Endothelial cell of umbilical vein (primary cell): ENCODE measurements at regions of chr3 and their contacts with region 1.

Region 1: GRCh38 chr3:39960515-39961191 is 151.2 kb downstream of the MYRIP start:
- DNase-seq: peak; percentile 99
- H3K4me3 ChIP-seq: no peak overlapping the region
- H3K27ac ChIP-seq: peak overlapping the region; percentile 70
- H3K4me1 ChIP-seq: peaks cover 9% of the 10 kb centered on the region
- H3K27me3 ChIP-seq: no peaks in the 10 kb centered on the region
- CTCF ChIP-seq: no peak
- POLR2A ChIP-seq: no peak

Region 2: GRCh38 chr3:39754549-39754948 is 206.1 kb before region 1 on chr3:
- CTCF ChIA-PET with region 1: no interaction called
- POLR2A ChIA-PET with region 1: no interaction called
- dilution Hi-C with region 1: no loop called
- intact Hi-C with region 1: no loop called
- DNase-seq: no peak
- H3K4me3 ChIP-seq: no peak overlapping the region
- H3K27ac ChIP-seq: no peak overlapping the region
- H3K4me1 ChIP-seq: peaks cover 61% of the 10 kb centered on the region
- H3K27me3 ChIP-seq: no peaks in the 10 kb centered on the region
- CTCF ChIP-seq: no peak
- POLR2A ChIP-seq: no peak

Region 3: DNA sequence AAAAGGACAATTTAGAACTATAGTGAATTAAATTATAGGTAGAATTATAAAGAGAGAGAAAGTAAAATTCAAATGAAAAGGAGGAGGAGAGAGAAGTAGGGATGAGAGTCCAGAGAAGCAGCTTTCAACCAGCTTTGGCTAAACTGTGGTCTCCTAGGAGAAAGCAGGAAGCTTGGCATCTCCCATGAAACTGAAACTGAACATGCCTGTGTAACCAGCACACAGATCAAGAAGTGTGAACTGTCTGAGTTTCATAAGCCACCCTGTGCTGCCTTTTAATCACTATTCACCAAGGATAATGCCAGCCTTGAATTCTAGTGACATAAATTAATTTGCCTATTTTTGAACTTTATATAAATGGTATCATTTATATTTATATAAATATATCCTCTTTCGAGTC is 22.8 kb before region 1 on chr3:
- CTCF ChIA-PET with region 1: no interaction called
- POLR2A ChIA-PET with region 1: no interaction called
- dilution Hi-C with region 1: no loop called
- intact Hi-C with region 1: loop called (anchors 1 kb)
- DNase-seq: peak; percentile 20
- H3K4me3 ChIP-seq: no peak overlapping the region
- H3K27ac ChIP-seq: no peak overlapping the region
- H3K4me1 ChIP-seq: peaks cover 25% of the 10 kb centered on the region
- H3K27me3 ChIP-seq: no peaks in the 10 kb centered on the region
- CTCF ChIP-seq: no peak
- POLR2A ChIP-seq: no peak